ENCODE measurements at regions of chr9 and their contacts with region 1.

Region 1: GRCh38 chr9:123544007-123544827 is 188.2 kb downstream of the CRB2 start:
- DNase-seq: no peak
- ATAC-seq: peak in 1 of 4 donors; percentile 58
- H3K4me3 ChIP-seq: no peak overlapping the region
- H3K27ac ChIP-seq: no peak overlapping the region
- H3K4me1 ChIP-seq: peaks cover 0 to 9% (median 0%) of the 10 kb centered on the region in 12 donors
- H3K27me3 ChIP-seq: no peaks in the 10 kb centered on the region
- CTCF ChIP-seq: peak; percentile 63 to 91 (median 82)
- POLR2A ChIP-seq: no peak

Region 2: GRCh38 chr9:123401879-123402513 is 142.2 kb before region 1 on chr9:
- intact Hi-C with region 1: loop called in 4 of 10 experiments (anchors 5 to 10 kb)
- DNase-seq: no peak
- ATAC-seq: peak; percentile 73 to 85 (median 82)
- H3K4me3 ChIP-seq: peak overlapping the region in 4 of 12 donors; percentile 19 to 31 (median 26)
- H3K27ac ChIP-seq: peak overlapping the region in 3 of 12 donors; percentile 9 to 53 (median 18)
- H3K4me1 ChIP-seq: peaks cover 0 to 10% (median 0%) of the 10 kb centered on the region in 12 donors
- H3K27me3 ChIP-seq: no peaks in the 10 kb centered on the region
- CTCF ChIP-seq: peak; percentile 43 to 78 (median 69)
- POLR2A ChIP-seq: no peak

Region 3: DNA sequence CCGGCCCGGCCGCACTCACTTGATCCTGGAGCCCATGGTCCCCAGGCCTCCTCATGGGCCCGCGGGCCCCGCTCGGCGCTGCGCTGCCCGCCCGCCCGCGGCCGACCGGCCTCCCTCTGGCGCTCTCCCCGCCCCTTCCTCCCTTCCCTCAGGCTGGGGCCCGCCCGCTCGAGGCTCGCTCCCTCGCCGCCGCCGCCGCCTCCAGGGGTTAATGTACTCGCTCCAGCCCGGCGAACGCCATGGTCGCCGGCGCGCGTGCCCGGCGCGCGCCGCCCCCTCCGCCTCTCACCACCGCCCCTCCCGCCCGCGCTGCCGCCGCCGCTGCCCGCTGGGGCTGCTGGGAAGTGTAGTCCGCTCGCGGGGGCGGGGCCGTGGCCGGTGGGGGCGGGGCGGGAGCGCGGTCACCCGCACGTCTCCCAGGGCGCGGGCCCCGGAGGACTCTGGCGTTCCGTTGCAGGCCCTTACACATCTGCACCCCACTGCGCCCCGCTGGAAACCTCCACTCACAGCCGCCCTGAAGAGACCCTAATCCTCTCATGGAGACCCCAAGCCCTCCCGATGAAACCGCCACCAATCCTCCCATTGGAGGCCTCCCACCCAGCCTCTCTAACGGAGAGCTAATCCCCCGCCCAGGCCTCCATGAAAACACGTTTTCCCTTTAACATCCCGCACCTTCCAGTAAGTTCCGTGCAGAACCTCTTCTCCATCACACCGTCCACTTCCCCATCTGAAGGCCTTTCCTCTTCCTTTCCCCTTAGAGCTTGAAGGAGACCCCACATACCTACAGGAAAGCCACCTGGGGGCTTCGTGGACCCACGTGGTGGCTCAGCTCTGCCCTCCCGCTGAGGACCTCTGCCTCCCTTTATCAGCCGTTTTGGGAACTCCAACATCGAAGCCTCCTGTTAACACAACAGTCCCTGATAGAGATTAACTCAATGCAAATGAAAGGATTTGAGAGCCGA is 385.9 kb after region 1 on chr9 and contains the start of gene DENND1A:
- intact Hi-C with region 1: loop called in 1 of 10 experiments (anchors 10 kb)
- DNase-seq: peak; percentile 93 to 96 (median 95)
- ATAC-seq: peak; percentile 78 to 98 (median 95)
- H3K4me3 ChIP-seq: peak within 1 kb of the TSS; percentile 63 to 94 (median 78)
- H3K27ac ChIP-seq: peak within 1 kb of the TSS in 11 of 12 donors; percentile 41 to 85 (median 70)
- H3K4me1 ChIP-seq: peaks cover 0 to 47% (median 15%) of the 10 kb centered on the region in 12 donors
- H3K27me3 ChIP-seq: no peaks in the 10 kb centered on the region
- CTCF ChIP-seq: no peak
- POLR2A ChIP-seq: peak in 1 of 2 donors; percentile 52
- total RNA-seq, gene DENND1A: 10.6 to 24.0 (median 15.7) TPM

Region 4: GRCh38 chr9:123997665-123998277 is 453.6 kb after region 1 on chr9:
- intact Hi-C with region 1: loop called in 1 of 10 experiments (anchors 5 kb)
- DNase-seq: peak; percentile 51 to 76 (median 56)
- ATAC-seq: peak in 3 of 4 donors; percentile 66 to 80 (median 71)
- H3K4me3 ChIP-seq: no peak overlapping the region
- H3K27ac ChIP-seq: no peak overlapping the region
- H3K4me1 ChIP-seq: peaks cover 0 to 37% (median 12%) of the 10 kb centered on the region in 12 donors
- H3K27me3 ChIP-seq: peaks cover 49 to 86% (median 77%) of the 10 kb centered on the region in 9 donors
- CTCF ChIP-seq: no peak
- POLR2A ChIP-seq: no peak

Region 5: GRCh38 chr9:124040935-124041816 is 497.0 kb after region 1 on chr9:
- intact Hi-C with region 1: loop called (anchors 1 to 5 kb)
- DNase-seq: peak in 4 of 5 donors; percentile 51 to 78 (median 54)
- ATAC-seq: peak in 3 of 4 donors; percentile 43 to 76 (median 72)
- H3K4me3 ChIP-seq: peak overlapping the region; percentile 17 to 53 (median 44)
- H3K27ac ChIP-seq: no peak overlapping the region
- H3K4me1 ChIP-seq: peaks cover 0 to 31% (median 20%) of the 10 kb centered on the region in 12 donors
- H3K27me3 ChIP-seq: peaks cover 6 to 74% (median 25%) of the 10 kb centered on the region in 9 donors
- CTCF ChIP-seq: peak; percentile 85 to 98 (median 96)
- POLR2A ChIP-seq: no peak

Region 6: DNA sequence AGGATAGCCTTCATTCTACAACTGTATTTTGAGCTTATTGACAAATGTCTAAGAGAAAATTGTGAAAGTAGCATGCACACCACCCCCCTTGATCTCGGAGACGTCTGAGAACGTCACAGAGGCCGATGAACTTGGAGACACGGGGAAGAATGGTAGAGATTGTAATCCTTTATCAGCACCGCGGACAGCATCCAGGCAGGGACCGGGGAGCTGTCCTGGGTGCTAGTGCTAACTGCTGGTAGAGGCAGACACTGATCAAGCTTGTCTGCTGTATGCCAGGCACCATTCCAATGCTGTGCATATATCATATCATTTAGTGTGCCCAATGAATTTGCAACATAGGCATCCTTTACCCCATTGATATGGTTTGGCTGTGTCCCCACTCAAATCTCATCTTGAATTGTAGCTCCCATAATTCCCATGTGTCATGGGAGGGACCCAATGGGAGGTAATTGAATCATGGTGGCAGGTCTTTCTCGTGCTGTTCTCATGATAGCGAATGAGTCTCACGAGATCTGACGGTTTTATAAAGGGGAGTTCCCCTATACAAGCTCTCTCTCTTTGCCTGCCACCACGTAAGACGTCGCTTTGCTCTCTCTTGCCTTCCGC is 566.2 kb after region 1 on chr9:
- intact Hi-C with region 1: loop called in 1 of 10 experiments (anchors 10 kb)
- DNase-seq: peak; percentile 49 to 69 (median 57)
- ATAC-seq: peak in 3 of 4 donors; percentile 77 to 78 (median 77)
- H3K4me3 ChIP-seq: no peak overlapping the region
- H3K27ac ChIP-seq: no peak overlapping the region
- H3K4me1 ChIP-seq: no peaks in the 10 kb centered on the region
- H3K27me3 ChIP-seq: peaks cover 0 to 6% (median 0%) of the 10 kb centered on the region in 9 donors
- CTCF ChIP-seq: no peak
- POLR2A ChIP-seq: no peak

Region 7: GRCh38 chr9:124320062-124320973 is 776.1 kb after region 1 on chr9:
- intact Hi-C with region 1: loop called in 2 of 10 experiments (anchors 10 kb)
- DNase-seq: peak; percentile 67 to 76 (median 73)
- ATAC-seq: peak; percentile 63 to 89 (median 84)
- H3K4me3 ChIP-seq: no peak overlapping the region
- H3K27ac ChIP-seq: no peak overlapping the region
- H3K4me1 ChIP-seq: peaks cover 0 to 8% (median 1%) of the 10 kb centered on the region in 12 donors
- H3K27me3 ChIP-seq: no peaks in the 10 kb centered on the region
- CTCF ChIP-seq: peak; percentile 76 to 92 (median 85)
- POLR2A ChIP-seq: no peak